Adrenal gland (tissue), 19 donors: ENCODE measurements at regions of chrX and their contacts with region 1.

Region 1: GRCh38 chrX:46912098-46912602 is at the start of gene JADE3:
- DNase-seq: peak; percentile 76 to 86 (median 78)
- H3K4me3 ChIP-seq: peak within 1 kb of the TSS; percentile 32 to 66 (median 47)
- H3K27ac ChIP-seq: peak within 1 kb of the TSS in 3 of 5 donors; percentile 67 to 85 (median 73)
- H3K4me1 ChIP-seq: no peaks in the 10 kb centered on the region
- H3K27me3 ChIP-seq: no peaks in the 10 kb centered on the region
- CTCF ChIP-seq: no peak
- POLR2A ChIP-seq: peak in 1 of 2 donors; percentile 71
- total RNA-seq, gene JADE3: 15.7 to 39.5 (median 19.2) TPM

Region 2: GRCh38 chrX:46704767-46705386 is 207.3 kb before region 1 on chrX:
- intact Hi-C with region 1: no loop called
- DNase-seq: no peak
- H3K4me3 ChIP-seq: no peak overlapping the region
- H3K27ac ChIP-seq: no peak overlapping the region
- H3K4me1 ChIP-seq: no peaks in the 10 kb centered on the region
- H3K27me3 ChIP-seq: peaks cover 12% of the 10 kb centered on the region
- CTCF ChIP-seq: no peak
- POLR2A ChIP-seq: no peak

Region 3: DNA sequence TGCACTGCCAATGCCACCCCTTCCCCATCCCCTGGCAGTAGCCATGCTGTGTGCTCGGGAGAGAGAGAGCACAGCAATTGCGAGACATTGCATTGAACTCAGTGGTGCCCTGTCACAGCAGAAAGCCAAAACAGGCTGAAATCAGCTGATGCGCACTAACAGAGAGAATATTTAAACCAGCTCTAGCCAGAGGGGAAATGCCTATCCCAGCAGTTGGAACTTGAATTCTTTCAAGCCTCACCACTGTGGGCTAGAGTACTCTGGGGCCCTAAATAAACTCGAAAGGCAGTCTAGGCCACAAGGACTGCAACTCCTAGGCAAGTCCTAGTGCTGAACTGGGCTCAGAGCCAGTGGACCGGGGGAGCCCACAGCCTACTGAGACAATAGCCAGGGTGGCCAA is 93.0 kb before region 1 on chrX:
- intact Hi-C with region 1: no loop called
- DNase-seq: no peak
- H3K4me3 ChIP-seq: no peak overlapping the region
- H3K27ac ChIP-seq: no peak overlapping the region
- H3K4me1 ChIP-seq: no peaks in the 10 kb centered on the region
- H3K27me3 ChIP-seq: peaks cover 2% of the 10 kb centered on the region
- CTCF ChIP-seq: no peak
- POLR2A ChIP-seq: no peak

Region 4: GRCh38 chrX:46984705-46985104 is 72.6 kb after region 1 on chrX:
- intact Hi-C with region 1: loop called in 1 of 2 experiments (anchors 10 kb)
- DNase-seq: no peak
- H3K4me3 ChIP-seq: no peak overlapping the region
- H3K27ac ChIP-seq: no peak overlapping the region
- H3K4me1 ChIP-seq: no peaks in the 10 kb centered on the region
- H3K27me3 ChIP-seq: no peaks in the 10 kb centered on the region
- CTCF ChIP-seq: no peak
- POLR2A ChIP-seq: no peak